Heart right ventricle (tissue), 16 donors: ENCODE measurements at regions of chr4 and their contacts with region 1.

Region 1: DNA sequence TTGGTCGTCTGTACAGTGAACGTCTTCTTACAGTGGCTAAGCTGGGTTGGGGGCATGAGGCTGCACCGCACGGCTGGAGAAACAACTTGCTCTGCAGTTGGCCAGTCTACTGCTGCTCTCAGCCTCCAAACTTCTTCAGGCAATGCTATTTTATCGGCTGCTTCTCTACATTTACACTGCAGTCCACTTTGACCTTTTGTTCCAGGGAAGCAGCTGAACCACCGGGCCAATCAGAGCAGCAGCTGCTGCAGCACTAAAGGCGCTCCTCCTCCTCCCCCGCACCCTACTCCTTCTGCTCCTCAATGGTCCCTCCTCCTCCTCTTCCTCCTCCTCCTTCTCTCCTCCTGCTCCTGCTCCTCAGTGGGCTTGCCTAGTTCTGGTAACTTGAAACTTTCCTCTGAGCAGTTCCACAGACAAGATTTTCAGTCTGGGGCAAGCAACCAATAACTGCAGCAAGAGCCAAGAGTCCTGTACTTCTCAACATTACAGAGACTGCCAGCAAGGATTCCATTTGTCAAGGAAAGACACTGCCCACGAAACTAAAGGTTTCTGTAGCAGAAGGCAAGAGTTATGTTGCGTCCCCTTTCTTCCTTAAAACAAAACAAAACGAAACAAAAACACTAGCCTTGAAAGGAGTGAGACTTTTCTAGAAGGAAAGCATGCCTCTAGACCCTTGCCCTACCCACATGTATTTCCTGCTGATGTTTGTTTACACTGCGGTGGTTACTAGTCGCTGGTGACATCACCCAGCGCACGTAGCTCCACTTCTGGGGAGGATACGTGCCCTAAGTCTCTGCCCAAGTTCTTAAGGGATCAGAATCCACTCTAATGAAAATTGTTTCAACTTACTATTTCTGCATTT is 125.7 kb upstream of the NAP1L5 start:
- DNase-seq: peak; percentile 82 to 93
- ATAC-seq: peak; percentile 96 to 98 (median 97)
- H3K4me3 ChIP-seq: peak overlapping the region; percentile 37 to 68 (median 60)
- H3K27ac ChIP-seq: peak overlapping the region; percentile 74 to 88 (median 84)
- H3K4me1 ChIP-seq: peaks cover 0 to 61% (median 37%) of the 10 kb centered on the region in 9 donors
- H3K27me3 ChIP-seq: no peaks in the 10 kb centered on the region
- CTCF ChIP-seq: no peak

Region 2: DNA sequence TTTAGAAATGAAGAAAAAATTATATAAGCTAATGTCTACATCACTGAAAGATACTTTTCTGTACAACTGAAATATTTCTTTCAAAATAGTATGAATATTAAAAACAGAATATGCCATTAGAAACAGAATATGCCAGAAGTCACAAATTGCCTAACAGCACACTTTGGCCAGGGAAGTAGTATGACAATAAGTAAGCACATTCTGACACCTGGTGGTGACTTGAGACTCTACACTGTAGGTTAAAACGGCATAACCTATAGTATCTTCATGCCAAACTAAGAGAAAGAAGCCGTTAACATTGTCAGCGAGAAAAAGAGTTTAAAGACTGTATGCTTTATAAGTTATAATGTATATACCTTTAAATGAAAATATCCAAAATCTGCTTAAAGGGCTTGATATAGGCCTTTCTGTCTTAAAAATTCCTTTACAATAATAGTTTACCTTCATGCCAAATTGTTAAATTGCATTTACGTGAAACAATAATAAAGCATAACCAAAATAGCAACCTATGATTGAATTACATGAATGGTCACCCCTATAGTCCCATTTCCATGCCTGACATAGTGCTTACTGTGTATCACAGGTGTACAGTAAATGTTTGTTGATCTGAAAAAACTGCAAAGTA is 200.9 kb after region 1 on chr4:
- intact Hi-C with region 1: loop called (anchors 1 to 5 kb)
- DNase-seq: peak in 1 of 2 donors; percentile 68
- ATAC-seq: peak; percentile 78 to 97 (median 95)
- H3K4me3 ChIP-seq: no peak overlapping the region
- H3K27ac ChIP-seq: no peak overlapping the region
- H3K4me1 ChIP-seq: peaks cover 0 to 23% (median 7%) of the 10 kb centered on the region in 9 donors
- H3K27me3 ChIP-seq: no peaks in the 10 kb centered on the region
- CTCF ChIP-seq: peak; percentile 57 to 92 (median 86)

Region 3: GRCh38 chr4:89029591-89029990 is 206.3 kb after region 1 on chr4:
- intact Hi-C with region 1: loop called in 9 of 10 experiments (anchors 1 to 5 kb)
- DNase-seq: no peak
- ATAC-seq: no peak
- H3K4me3 ChIP-seq: no peak overlapping the region
- H3K27ac ChIP-seq: no peak overlapping the region
- H3K4me1 ChIP-seq: no peaks in the 10 kb centered on the region
- H3K27me3 ChIP-seq: no peaks in the 10 kb centered on the region
- CTCF ChIP-seq: no peak

Region 4: GRCh38 chr4:89110986-89111832 is 287.9 kb after region 1 on chr4 and contains the start of gene TIGD2:
- intact Hi-C with region 1: loop called in 2 of 10 experiments (anchors 10 kb)
- DNase-seq: peak; percentile 84 to 89
- ATAC-seq: peak; percentile 97 to 99 (median 98)
- H3K4me3 ChIP-seq: peak within 1 kb of the TSS; percentile 56 to 92 (median 73)
- H3K27ac ChIP-seq: peak within 1 kb of the TSS in 9 of 10 donors; percentile 73 to 89 (median 83)
- H3K4me1 ChIP-seq: peaks cover 0 to 26% (median 14%) of the 10 kb centered on the region in 9 donors
- H3K27me3 ChIP-seq: peaks cover 0 to 15% (median 0%) of the 10 kb centered on the region in 7 donors
- CTCF ChIP-seq: peak; percentile 74 to 91 (median 85)
- total RNA-seq, gene TIGD2: 1.2 to 2.8 (median 2.0) TPM